Right lobe of liver (tissue), 6 donors: ENCODE measurements at regions of chr6 and their contacts with region 1.

Region 1: GRCh38 chr6:106811088-106811686 is 163.3 kb downstream of the CD24 start:
- DNase-seq: no peak
- ATAC-seq: no peak
- H3K4me3 ChIP-seq: no peak overlapping the region
- H3K27ac ChIP-seq: no peak overlapping the region
- H3K4me1 ChIP-seq: no peaks in the 10 kb centered on the region
- H3K27me3 ChIP-seq: no peaks in the 10 kb centered on the region
- CTCF ChIP-seq: no peak
- POLR2A ChIP-seq: no peak

Region 2: DNA sequence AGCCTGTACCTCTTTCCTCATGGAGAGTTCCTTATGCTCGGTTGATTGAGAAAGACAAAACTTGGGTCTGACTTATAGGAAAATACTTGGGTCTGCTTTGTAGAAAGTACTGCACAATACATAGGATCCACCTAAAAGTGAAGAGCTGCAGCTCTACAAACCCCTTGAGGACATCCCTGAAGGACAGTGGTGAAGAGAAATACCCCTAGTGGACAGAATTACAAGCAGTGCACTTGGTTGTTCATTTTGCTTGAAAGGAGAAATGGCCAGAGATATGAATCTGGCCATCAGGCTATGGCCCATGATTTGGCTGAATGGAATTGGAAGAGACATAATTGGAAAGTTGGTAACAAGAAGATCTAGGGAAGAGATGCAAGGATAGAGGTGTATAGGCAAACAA is 155.0 kb after region 1 on chr6:
- intact Hi-C with region 1: loop called in 1 of 2 experiments (anchors 10 kb)
- DNase-seq: no peak
- ATAC-seq: no peak
- H3K4me3 ChIP-seq: no peak overlapping the region
- H3K27ac ChIP-seq: no peak overlapping the region
- H3K4me1 ChIP-seq: no peaks in the 10 kb centered on the region
- H3K27me3 ChIP-seq: no peaks in the 10 kb centered on the region
- CTCF ChIP-seq: no peak
- POLR2A ChIP-seq: no peak